Right ventricle myocardium superior (tissue), 1 donor: ENCODE measurements at regions of chr16 and their contacts with region 1.

Region 1: DNA sequence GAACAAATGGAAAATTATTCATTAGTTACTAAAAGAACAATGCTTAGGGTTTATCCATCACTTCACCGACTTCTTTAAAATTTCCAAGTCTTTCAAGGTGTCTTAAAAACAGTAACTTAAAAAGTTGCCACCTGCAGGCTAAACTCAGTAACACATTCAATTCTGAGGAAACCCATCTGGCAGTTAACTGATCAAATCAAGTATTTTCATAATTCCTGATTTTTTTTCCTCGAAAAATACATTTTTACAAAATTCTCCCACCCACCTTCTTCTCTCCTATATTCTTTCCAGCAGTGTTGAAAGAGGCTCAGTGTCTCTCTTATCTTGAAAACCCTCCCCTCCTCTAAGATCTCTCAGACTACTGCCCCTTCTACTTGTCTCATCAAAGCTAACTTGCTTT is 29.9 kb downstream of the PARN start:
- DNase-seq: no peak
- ATAC-seq: no peak

Region 2: DNA sequence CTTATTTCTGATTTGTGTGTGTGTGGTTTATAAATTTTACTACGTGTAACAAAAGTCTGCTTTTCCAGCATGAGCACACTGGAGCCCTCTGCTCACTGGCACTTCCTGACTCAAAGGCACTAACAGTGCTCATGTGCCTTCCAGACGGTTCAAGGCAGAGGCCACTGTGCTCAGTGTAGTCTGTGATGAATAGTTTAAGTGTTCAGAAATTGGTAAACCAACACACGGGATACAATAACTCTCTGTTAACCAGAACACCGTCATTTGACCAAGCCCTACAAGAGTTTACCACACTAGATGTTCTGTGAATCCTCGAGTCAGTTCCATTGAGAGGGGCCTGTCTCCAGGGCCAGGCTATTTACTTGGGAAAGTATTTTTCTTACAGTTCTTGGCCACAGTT is 337.2 kb before region 1 on chr16:
- intact Hi-C with region 1: loop called (anchors 10 kb)
- DNase-seq: no peak
- ATAC-seq: no peak